Activated CD8-positive, alpha-beta T cell treated with anti-CD3 and anti-CD28 coated beads for 36 hours (primary cell): ENCODE measurements at regions of chr15 and their contacts with region 1.

Region 1: GRCh38 chr15:94163999-94164807 is 67.2 kb upstream of the MCTP2 start:
- DNase-seq: peak; percentile 74
- ATAC-seq: peak; percentile 72
- H3K4me3 Mint-ChIP-seq: no peak overlapping the region
- H3K27ac Mint-ChIP-seq: no peak overlapping the region
- H3K4me1 Mint-ChIP-seq: no peaks in the 10 kb centered on the region
- H3K27me3 Mint-ChIP-seq: peaks cover 4% of the 10 kb centered on the region
- CTCF ChIP-seq: peak; percentile 98

Region 2: DNA sequence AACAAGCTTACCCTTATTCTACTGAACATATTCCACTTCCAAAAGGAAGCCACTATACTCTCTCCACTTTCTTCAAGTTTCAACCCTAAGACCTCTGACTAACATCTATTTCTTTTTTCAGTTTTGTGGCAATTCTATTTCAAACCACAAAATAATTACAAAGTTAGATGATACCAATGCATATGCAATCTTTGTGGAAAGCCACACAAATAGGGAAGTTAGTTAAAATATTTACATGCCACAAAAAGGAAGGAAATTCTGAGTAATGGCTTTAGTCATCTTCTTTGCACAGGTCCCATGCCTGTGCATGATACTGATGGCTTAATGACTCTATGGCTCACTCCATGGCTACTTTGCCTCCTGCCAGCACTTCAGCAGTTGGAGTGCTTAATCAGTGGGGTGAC is 10.2 kb after region 1 on chr15:
- CTCF ChIA-PET with region 1: interaction called, 11 read pairs
- POLR2A ChIA-PET with region 1: no interaction called
- intact Hi-C with region 1: no loop called
- DNase-seq: peak; percentile 54
- ATAC-seq: peak; percentile 93
- H3K4me3 Mint-ChIP-seq: no peak overlapping the region
- H3K27ac Mint-ChIP-seq: no peak overlapping the region
- H3K4me1 Mint-ChIP-seq: peaks cover 27% of the 10 kb centered on the region
- H3K27me3 Mint-ChIP-seq: peaks cover 2% of the 10 kb centered on the region
- CTCF ChIP-seq: no peak

Region 3: GRCh38 chr15:94335616-94336015 is 171.4 kb after region 1 on chr15:
- CTCF ChIA-PET with region 1: interaction called, 50 read pairs
- POLR2A ChIA-PET with region 1: no interaction called
- intact Hi-C with region 1: no loop called
- DNase-seq: no peak
- ATAC-seq: no peak
- H3K4me3 Mint-ChIP-seq: no peak overlapping the region
- H3K27ac Mint-ChIP-seq: no peak overlapping the region
- H3K4me1 Mint-ChIP-seq: no peaks in the 10 kb centered on the region
- H3K27me3 Mint-ChIP-seq: no peaks in the 10 kb centered on the region
- CTCF ChIP-seq: no peak

Region 4: DNA sequence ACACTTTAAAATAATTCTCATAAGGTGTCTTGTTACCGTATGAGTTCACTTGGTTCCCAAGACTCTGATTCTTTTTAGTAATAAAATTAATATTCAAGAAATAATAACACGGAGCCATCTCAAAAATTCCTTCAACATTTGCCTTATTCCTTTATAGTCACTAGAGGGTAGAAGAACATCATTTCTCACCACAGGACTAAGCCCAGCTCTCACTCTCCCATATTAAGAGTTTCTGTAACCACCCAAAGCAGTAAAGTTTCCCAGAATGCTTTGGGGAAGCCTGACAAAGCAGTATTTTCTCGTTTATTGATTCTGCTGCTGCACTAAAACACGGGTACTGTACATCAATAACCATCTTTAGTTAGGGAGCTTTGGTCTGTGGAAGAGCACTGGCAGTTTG is 182.1 kb after region 1 on chr15:
- CTCF ChIA-PET with region 1: interaction called, 13 read pairs
- POLR2A ChIA-PET with region 1: no interaction called
- intact Hi-C with region 1: no loop called
- DNase-seq: no peak
- ATAC-seq: no peak
- H3K4me3 Mint-ChIP-seq: no peak overlapping the region
- H3K27ac Mint-ChIP-seq: no peak overlapping the region
- H3K4me1 Mint-ChIP-seq: no peaks in the 10 kb centered on the region
- H3K27me3 Mint-ChIP-seq: no peaks in the 10 kb centered on the region
- CTCF ChIP-seq: no peak